ENCODE measurements at regions of chr5 and their contacts with region 1.

Region 1: GRCh38 chr5:178075840-178076548 is 37.3 kb upstream of the N4BP3 start:
- DNase-seq: peak; percentile 82
- H3K4me3 Mint-ChIP-seq: no peak overlapping the region
- H3K27ac Mint-ChIP-seq: no peak overlapping the region
- H3K4me1 Mint-ChIP-seq: peaks cover 2% of the 10 kb centered on the region
- H3K27me3 Mint-ChIP-seq: peaks cover 6% of the 10 kb centered on the region

Region 2: GRCh38 chr5:178120868-178121357 is 44.9 kb after region 1 on chr5:
- CTCF ChIA-PET with region 1: interaction called, 18 read pairs
- POLR2A ChIA-PET with region 1: no interaction called
- DNase-seq: peak; percentile 90
- H3K4me3 Mint-ChIP-seq: peak overlapping the region; percentile 38
- H3K27ac Mint-ChIP-seq: peak overlapping the region; percentile 25
- H3K4me1 Mint-ChIP-seq: peaks cover 24% of the 10 kb centered on the region
- H3K27me3 Mint-ChIP-seq: peaks cover 4% of the 10 kb centered on the region

Region 3: DNA sequence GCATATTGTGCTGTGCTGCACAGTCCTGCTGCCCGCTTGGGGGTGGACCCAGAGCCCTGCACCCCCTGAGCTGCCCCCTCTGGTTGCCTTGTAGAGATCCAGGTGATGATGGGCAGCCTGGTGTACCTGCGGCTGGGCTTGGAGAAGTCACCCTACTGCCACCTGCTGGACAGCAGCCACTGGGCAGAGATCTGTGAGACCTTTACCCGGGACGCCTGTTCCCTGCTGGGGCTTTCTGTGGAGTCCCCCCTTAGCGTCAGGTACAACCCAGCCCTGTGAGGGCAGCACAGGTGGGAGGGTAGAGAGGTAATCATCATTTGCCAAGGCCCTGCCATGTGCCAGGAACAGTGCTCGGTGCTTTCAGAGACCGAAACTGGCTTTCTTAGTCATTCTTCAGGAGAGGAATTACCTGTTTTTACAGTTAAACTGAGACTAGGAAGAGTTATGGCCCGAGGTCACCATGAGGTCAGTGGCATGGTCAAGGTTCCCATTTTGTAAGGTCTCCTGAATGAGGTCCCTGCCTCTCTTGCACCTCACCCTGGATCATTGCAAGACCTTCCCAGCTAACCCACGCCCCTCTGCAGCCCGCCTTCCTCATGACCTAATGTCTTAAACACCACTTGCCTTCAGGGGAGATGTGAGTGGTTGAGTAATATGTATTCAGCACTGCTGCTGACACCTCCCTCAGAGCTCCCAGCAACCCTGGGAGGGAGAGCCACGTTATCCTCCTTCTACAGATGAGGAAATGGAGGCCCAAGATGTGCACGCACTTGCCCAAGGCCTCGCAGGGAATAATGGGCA is 70.2 kb after region 1 on chr5:
- CTCF ChIA-PET with region 1: interaction called, 22 read pairs
- POLR2A ChIA-PET with region 1: no interaction called
- DNase-seq: peak; percentile 77
- H3K4me3 Mint-ChIP-seq: no peak overlapping the region
- H3K27ac Mint-ChIP-seq: no peak overlapping the region
- H3K4me1 Mint-ChIP-seq: peaks cover 27% of the 10 kb centered on the region
- H3K27me3 Mint-ChIP-seq: no peaks in the 10 kb centered on the region

Region 4: GRCh38 chr5:178151319-178151734 is 75.3 kb after region 1 on chr5:
- CTCF ChIA-PET with region 1: interaction called, 25 read pairs
- POLR2A ChIA-PET with region 1: interaction called, 3 read pairs
- DNase-seq: no peak
- H3K4me3 Mint-ChIP-seq: peak overlapping the region; percentile 43
- H3K27ac Mint-ChIP-seq: peak overlapping the region; percentile 58
- H3K4me1 Mint-ChIP-seq: peaks cover 50% of the 10 kb centered on the region
- H3K27me3 Mint-ChIP-seq: no peaks in the 10 kb centered on the region

Region 5: GRCh38 chr5:178162481-178162880 is 86.5 kb after region 1 on chr5:
- CTCF ChIA-PET with region 1: interaction called, 25 read pairs
- POLR2A ChIA-PET with region 1: no interaction called
- DNase-seq: no peak
- H3K4me3 Mint-ChIP-seq: no peak overlapping the region
- H3K27ac Mint-ChIP-seq: no peak overlapping the region
- H3K4me1 Mint-ChIP-seq: peaks cover 10% of the 10 kb centered on the region
- H3K27me3 Mint-ChIP-seq: peaks cover 23% of the 10 kb centered on the region

Measured in activated CD4-positive, alpha-beta T cell treated with anti-CD3 and anti-CD28 coated beads, Interleukin-2, amount 10 ng/mL, durations not matched to agents 7 days and 5 days (primary cell).